ENCODE measurements at regions of chr15 and their contacts with region 1.

Region 1: GRCh38 chr15:34900748-34901147 is 68.8 kb downstream of the AQR start:
- DNase-seq: no peak
- ATAC-seq: peak; percentile 60 to 69
- H3K4me3 ChIP-seq: no peak overlapping the region
- H3K27ac ChIP-seq: peak overlapping the region; percentile 17 to 51 (median 30)
- H3K4me1 ChIP-seq: peaks cover 8 to 13% of the 10 kb centered on the region in 2 donors
- H3K27me3 ChIP-seq: no peaks in the 10 kb centered on the region
- CTCF ChIP-seq: no peak
- POLR2A ChIP-seq: no peak

Region 2: DNA sequence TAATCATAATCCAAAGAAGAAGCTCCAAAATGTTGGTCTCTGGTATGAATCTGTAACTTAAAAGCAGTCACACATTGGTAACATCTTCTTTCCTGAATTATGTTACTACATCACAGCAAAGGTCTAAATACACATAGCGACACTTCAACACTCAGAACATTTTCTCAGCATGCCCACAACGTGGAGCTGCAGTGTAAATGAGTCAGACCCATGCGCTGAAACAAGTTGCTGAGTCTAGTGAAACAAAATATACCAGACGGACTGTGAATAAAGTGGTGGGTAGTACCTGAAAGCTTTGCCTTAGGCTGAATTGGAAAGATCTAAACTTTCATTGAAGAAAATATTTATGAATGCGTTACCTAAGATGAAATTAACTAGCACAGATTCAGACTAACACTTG is 284.1 kb before region 1 on chr15:
- in situ Hi-C with region 1: loop called in 1 of 4 experiments (anchors 25 kb)
- intact Hi-C with region 1: no loop called
- DNase-seq: no peak
- ATAC-seq: peak; percentile 68 to 96
- H3K4me3 ChIP-seq: no peak overlapping the region
- H3K27ac ChIP-seq: no peak overlapping the region
- H3K4me1 ChIP-seq: peaks cover 0 to 12% of the 10 kb centered on the region in 2 donors
- H3K27me3 ChIP-seq: peaks cover 0 to 3% (median 0%) of the 10 kb centered on the region in 3 donors
- CTCF ChIP-seq: no peak
- POLR2A ChIP-seq: no peak

Region 3: DNA sequence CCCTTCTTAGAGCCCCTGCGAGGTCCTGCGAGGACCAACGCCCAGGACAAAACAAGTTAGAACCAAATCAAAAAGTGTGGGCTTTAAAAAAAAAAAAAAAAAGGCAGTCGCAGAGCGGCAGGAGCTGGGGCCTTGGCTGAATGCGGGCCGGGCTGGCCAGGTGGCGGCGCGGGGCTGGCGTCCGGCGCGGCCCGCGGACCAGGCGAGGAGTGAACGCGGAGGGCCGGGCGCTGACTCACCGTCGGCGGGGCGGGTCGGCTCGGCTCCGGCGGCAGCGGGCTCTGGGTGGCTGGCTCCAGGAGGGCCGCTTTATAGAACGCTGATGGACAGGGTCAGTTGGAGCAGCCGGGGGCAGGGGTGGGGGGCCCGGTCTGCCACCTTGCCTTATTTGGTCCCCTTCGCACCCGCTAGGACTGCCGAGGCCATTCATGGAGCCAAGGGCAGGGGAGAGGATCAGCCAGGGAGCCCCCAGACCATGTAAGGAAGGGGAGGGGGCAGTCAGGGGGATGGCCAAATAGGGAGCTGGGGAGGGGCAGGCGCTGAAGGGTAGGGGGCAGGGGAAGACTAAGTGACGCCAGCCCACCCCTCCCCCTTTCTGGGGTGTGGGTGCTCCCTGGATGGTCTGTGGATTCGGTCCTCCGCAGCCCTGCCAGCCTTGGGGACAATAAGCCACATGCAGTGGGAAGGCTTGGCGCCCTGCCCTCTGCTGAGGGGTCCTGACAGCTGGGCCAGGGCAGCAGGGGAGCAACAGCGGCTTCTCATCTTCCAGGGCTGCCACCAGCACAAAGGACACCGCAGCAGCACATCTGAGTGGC is 105.3 kb before region 1 on chr15 and contains the start of gene ACTC1:
- in situ Hi-C with region 1: no loop called
- intact Hi-C with region 1: loop called (anchors 5 kb)
- DNase-seq: peak; percentile 16 to 55
- ATAC-seq: peak; percentile 65 to 73
- H3K4me3 ChIP-seq: peak within 1 kb of the TSS; percentile 40 to 49 (median 47)
- H3K27ac ChIP-seq: peak within 1 kb of the TSS in 3 of 4 donors; percentile 35 to 79 (median 35)
- H3K4me1 ChIP-seq: peaks cover 16 to 23% of the 10 kb centered on the region in 2 donors
- H3K27me3 ChIP-seq: no peaks in the 10 kb centered on the region
- CTCF ChIP-seq: peak in 1 of 5 experiments; percentile 10
- POLR2A ChIP-seq: peak; percentile 40 to 63
- total RNA-seq, gene ACTC1: 5.6 to 449 (median 78.0) TPM

Region 4: GRCh38 chr15:35043373-35044095 is 142.8 kb after region 1 on chr15:
- in situ Hi-C with region 1: no loop called
- intact Hi-C with region 1: no loop called
- DNase-seq: no peak
- ATAC-seq: no peak
- H3K4me3 ChIP-seq: no peak overlapping the region
- H3K27ac ChIP-seq: no peak overlapping the region
- H3K4me1 ChIP-seq: no peaks in the 10 kb centered on the region
- H3K27me3 ChIP-seq: no peaks in the 10 kb centered on the region
- CTCF ChIP-seq: no peak
- POLR2A ChIP-seq: no peak